ENCODE measurements at regions of chr1 and their contacts with region 1.

Region 1: GRCh38 chr1:26284597-26285360 is 4.9 kb downstream of the SH3BGRL3 start:
- DNase-seq: peak; percentile 69
- H3K4me3 ChIP-seq: no peak overlapping the region; the same call in 1 of the 2 replicates
- CTCF ChIP-seq: peak; percentile 85

Region 2: DNA sequence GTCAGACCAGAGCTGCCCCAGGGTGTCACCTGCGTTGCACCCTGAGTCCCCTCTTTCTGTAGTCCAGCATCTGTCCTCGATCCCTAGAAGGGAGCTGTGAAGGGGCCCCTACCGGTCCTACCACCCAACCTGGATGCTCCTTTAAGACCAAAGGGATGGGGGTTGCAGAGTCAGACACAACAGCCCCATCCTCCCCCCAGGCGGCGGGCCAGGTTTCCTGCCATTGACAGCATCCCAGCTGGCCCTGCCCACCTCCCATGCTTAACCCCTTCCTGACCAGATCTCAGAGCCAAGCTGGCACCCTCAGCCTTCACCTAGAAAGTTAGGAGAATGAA is 128.1 kb before region 1 on chr1:
- CTCF ChIA-PET with region 1: no interaction called
- POLR2A ChIA-PET with region 1: no interaction called
- DNase-seq: no peak
- H3K4me3 ChIP-seq: no peak overlapping the region
- CTCF ChIP-seq: no peak

Region 3: GRCh38 chr1:26181586-26182382 is 103.0 kb before region 1 on chr1:
- CTCF ChIA-PET with region 1: no interaction called
- POLR2A ChIA-PET with region 1: no interaction called
- DNase-seq: no peak
- H3K4me3 ChIP-seq: no peak overlapping the region
- CTCF ChIP-seq: no peak

Region 4: GRCh38 chr1:26265405-26265804 is 19.4 kb before region 1 on chr1:
- CTCF ChIA-PET with region 1: interaction called, 18 read pairs
- POLR2A ChIA-PET with region 1: interaction called, 3 read pairs
- DNase-seq: no peak
- H3K4me3 ChIP-seq: no peak overlapping the region
- CTCF ChIP-seq: no peak

Region 5: GRCh38 chr1:26300586-26301275 is 16.0 kb after region 1 on chr1:
- CTCF ChIA-PET with region 1: interaction called, 36 read pairs
- POLR2A ChIA-PET with region 1: interaction called, 4 read pairs
- DNase-seq: no peak
- H3K4me3 ChIP-seq: no peak overlapping the region
- CTCF ChIP-seq: no peak

Region 6: DNA sequence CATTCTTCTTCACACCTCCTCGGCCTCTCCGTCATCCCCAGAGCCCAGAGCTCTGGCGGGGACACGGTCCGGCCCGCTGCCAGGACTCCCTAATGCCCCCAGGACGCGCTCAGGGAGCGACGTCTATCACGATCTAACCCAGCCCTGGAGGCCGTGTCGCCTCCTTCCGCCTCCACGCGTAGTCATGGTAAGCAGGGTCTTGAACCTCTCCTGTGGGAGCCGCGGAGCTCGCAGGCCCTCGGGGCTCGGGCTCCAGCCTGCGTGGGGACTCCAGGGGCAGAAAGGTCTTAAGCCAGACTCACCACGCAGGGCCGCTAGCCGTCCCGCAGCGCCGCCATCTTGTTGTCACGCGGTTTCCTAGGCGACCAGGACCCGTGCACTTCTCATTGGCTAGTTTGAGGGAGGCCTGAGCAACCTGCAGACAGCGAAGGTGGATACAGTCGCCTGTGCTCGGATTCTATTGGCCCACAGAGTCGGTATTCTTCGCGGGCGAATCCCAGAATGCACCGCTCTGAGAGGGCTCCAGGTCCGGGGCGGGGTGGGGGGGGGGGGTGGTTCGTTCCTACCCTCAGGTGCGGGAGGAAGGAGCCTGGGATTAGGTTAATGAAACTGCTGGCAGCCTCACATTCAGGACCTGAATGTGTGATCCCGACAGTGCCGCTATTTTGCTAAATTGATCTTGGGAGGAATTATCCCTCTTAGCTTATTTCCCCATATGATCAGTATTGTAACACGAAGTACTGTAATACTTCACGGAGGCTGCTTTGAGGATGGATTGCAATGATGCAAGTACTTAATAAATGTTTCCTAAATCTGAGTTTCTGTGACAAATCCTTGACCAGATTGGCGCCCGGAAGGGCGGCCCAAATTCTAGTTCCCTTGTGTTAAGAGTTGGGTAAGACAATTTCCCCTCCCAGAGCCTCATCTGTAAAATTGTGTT is 21.8 kb after region 1 on chr1 and contains the start of gene UBXN11:
- CTCF ChIA-PET with region 1: interaction called, 36 read pairs
- POLR2A ChIA-PET with region 1: interaction called, 4 read pairs
- DNase-seq: peak; percentile 64
- H3K4me3 ChIP-seq: peak within 1 kb of the TSS; percentile 94
- CTCF ChIP-seq: no peak

Measured in AG04449 (cell line).